ENCODE measurements at regions of chr9 and their contacts with region 1.

Region 1: GRCh38 chr9:34328987-34329832 is at the starts of genes KIF24 and NUDT2:
- DNase-seq: peak; percentile 99
- H3K4me3 Mint-ChIP-seq: peak within 1 kb of the TSS; percentile 89
- H3K27ac Mint-ChIP-seq: peak within 1 kb of the TSS; percentile 97
- H3K4me1 Mint-ChIP-seq: peaks cover 32% of the 10 kb centered on the region
- H3K27me3 Mint-ChIP-seq: no peaks in the 10 kb centered on the region
- total RNA-seq, gene KIF24: 5.9 and 6.2 TPM in 2 replicates
- total RNA-seq, gene NUDT2: 30.4 and 31.9 TPM in 2 replicates

Region 2: DNA sequence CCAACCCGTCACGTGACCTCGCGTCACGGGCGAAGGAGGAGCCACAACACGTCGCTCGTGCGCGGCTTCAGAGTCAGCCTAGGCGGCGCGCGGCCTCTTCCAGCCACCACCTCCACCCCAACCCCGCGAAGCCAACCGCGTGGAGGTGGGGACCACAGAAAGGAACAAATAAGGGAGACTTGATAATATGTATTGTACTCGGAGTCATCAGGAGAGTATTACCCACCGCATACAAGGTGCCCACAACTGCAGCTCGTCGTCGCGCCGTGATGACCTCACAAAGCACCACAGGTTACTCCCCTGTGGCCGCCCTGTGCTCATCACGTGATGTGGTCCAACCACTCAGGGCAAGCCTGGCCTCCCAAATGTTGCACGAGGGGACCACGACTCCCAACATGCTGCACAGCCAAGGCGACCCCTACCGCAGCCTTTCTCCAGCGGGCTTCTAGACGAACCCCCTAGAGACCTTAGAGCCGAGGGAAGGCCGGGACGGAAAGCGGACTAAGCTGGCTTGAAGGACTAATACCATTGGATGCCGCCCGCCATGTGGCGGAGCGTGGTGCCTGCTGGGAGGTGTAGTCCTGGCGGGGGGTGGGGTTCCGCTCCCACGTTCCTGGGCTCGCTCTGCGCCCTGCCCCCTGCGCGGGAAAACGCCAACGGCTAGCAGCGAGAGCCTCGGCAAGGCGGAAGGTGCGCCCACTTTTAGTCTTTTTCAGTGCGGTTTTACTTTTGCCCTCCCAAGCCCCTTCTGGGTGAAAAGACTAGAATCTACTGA is 280.1 kb before region 1 on chr9:
- intact Hi-C with region 1: loop called (anchors 1 kb)
- DNase-seq: peak; percentile 99
- H3K4me3 Mint-ChIP-seq: peak overlapping the region; percentile 96
- H3K27ac Mint-ChIP-seq: peak overlapping the region; percentile 99
- H3K4me1 Mint-ChIP-seq: peaks cover 41% of the 10 kb centered on the region
- H3K27me3 Mint-ChIP-seq: peaks cover 3% of the 10 kb centered on the region

Measured in activated CD4-positive, alpha-beta T cell treated with anti-CD3 and anti-CD28 coated beads, Interleukin-2, amount 10 ng/mL, durations not matched to agents 24 days and 14 days (primary cell).